ENCODE measurements at regions of chr14 and their contacts with region 1.

Region 1: DNA sequence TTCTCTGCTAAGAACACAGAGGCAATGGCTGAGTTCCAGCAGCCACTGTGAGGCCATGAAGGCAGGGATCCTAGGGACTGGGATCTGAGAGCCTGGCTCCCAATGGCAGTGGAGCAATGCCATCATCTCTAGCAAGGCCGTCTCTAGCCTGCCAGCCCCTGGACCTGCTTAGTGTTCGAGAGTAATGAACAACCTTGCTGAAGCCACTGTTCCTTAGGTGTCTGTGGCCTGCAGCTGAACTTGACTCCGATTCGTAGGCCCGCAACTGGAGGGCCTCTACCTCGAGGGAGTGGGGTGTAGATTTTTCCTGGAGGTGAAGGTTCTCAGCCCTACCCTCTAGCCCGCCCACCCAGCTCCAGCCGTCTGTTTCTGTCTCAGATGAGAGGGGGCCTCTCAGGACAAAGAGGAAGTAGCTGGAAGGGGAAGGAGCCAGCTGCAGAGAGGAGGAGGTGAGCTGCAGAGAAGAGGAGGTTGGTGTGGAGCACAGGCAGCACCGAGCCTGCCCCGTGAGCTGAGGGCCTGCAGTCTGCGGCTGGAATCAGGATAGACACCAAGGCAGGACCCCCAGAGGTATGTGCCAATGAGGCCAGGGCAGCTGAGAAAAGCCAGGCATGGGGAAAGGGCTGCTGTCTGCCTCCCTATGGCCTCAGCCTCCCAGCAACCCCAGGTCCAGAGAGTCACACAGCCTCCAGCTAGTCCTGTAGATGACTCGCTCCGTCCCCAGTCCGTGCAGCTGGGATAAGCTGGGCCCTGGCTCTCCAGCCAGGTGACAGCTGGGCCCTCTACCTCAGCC is at the start of gene PLD4:
- DNase-seq: no peak
- H3K4me3 Mint-ChIP-seq: no peak within 1 kb of the TSS
- H3K27ac Mint-ChIP-seq: no peak within 1 kb of the TSS
- H3K4me1 Mint-ChIP-seq: no peaks in the 10 kb centered on the region
- H3K27me3 Mint-ChIP-seq: peaks cover 5% of the 10 kb centered on the region
- total RNA-seq, gene PLD4: 0.10 and 0.21 TPM in 2 replicates

Region 2: GRCh38 chr14:104694991-104695659 is 229.5 kb before region 1 on chr14:
- intact Hi-C with region 1: no loop called
- DNase-seq: peak; percentile 39
- H3K4me3 Mint-ChIP-seq: peak overlapping the region; percentile 62
- H3K27ac Mint-ChIP-seq: peak overlapping the region; percentile 87
- H3K4me1 Mint-ChIP-seq: peaks cover 36% of the 10 kb centered on the region
- H3K27me3 Mint-ChIP-seq: no peaks in the 10 kb centered on the region

Region 3: GRCh38 chr14:104908303-104908702 is 16.3 kb before region 1 on chr14:
- intact Hi-C with region 1: no loop called
- DNase-seq: no peak
- H3K4me3 Mint-ChIP-seq: no peak overlapping the region
- H3K27ac Mint-ChIP-seq: no peak overlapping the region
- H3K4me1 Mint-ChIP-seq: no peaks in the 10 kb centered on the region
- H3K27me3 Mint-ChIP-seq: peaks cover 22% of the 10 kb centered on the region

Region 4: DNA sequence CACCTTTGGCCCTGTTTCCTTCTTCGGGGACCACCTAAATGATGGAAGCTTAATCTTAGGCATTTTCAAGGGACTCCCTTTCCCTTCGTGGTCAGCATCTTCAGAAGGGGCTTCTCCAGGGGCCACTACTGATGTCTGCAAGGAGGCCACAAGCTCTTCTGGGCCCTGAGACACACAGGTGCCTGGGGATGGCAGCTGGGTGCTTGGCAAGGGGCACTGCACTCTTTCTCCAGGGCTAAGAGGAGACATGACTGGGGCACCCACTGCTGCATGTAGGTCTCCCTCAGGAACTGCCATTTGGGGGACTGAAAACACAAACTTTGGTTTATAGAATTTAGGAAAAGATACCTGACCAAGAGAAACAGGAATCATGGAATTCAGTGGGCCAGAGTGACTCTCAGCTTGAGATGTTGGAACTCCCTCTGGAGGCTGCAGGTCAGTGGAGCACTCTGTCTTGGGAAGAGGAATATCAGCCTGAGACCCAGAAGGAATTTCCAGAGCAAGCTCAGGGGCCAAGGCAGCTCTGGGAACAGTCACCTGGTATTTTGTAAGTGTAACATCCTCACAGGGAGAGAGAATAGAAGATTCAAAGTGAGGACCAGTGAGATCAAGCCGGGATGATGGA is 16.0 kb after region 1 on chr14:
- intact Hi-C with region 1: loop called (anchors 1 kb)
- DNase-seq: no peak
- H3K4me3 Mint-ChIP-seq: no peak overlapping the region
- H3K27ac Mint-ChIP-seq: no peak overlapping the region
- H3K4me1 Mint-ChIP-seq: no peaks in the 10 kb centered on the region
- H3K27me3 Mint-ChIP-seq: peaks cover 6% of the 10 kb centered on the region